ENCODE measurements at regions of chr1 and their contacts with region 1.

Region 1: DNA sequence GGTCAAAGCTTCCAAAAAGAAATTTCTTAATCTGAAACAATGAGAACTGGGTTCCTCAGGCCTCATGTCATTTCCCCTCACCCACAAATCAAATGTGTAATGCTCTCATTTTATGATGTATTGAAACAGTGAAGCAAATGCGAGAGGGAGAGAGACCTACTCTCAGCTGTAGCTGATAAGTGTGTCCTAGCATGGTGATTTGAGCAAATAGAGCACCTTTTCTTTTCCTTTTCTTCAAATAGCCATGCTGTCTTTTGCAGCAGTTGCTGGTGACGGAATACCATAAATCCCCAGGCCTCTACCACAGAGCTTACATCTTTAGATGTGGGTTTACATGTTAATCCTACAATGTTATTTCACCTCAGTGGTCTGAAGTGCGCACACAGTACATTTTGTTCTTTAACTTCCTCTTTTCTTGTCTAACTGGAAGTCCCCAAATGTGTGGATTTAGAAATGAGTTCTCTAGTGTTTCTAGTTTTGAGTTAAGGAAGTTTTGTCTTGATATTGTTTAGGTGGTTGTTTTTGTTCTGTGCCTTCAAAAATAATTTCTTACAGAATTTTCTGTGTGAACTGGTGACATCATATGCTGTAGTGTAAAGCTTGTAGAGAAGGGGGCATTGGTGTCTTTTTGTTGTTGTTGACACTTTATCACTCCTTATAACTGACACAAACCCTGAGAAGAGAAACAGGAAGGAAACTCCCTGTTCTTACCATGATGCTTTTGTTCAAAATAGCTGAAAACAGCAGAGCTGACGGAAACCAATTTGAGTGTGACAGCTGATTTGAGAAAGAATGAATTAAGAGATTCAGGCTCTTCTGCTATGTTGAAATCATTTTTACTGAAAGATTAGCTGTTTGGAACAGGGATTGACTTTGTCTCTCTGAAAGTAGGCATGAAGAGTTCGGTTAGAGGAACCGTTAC is 12.2 kb downstream of the SMAP2 start:
- DNase-seq: no peak
- ATAC-seq: no peak
- H3K4me3 Mint-ChIP-seq: no peak overlapping the region
- H3K27ac Mint-ChIP-seq: 0 out of 2 replicates have a peak overlapping the region, but pooled peaks have one; percentile 29
- H3K4me1 Mint-ChIP-seq: peaks cover 8% of the 10 kb centered on the region; the same call in 1 of the 2 replicates
- H3K27me3 Mint-ChIP-seq: no peaks in the 10 kb centered on the region
- CTCF ChIP-seq: no peak

Region 2: DNA sequence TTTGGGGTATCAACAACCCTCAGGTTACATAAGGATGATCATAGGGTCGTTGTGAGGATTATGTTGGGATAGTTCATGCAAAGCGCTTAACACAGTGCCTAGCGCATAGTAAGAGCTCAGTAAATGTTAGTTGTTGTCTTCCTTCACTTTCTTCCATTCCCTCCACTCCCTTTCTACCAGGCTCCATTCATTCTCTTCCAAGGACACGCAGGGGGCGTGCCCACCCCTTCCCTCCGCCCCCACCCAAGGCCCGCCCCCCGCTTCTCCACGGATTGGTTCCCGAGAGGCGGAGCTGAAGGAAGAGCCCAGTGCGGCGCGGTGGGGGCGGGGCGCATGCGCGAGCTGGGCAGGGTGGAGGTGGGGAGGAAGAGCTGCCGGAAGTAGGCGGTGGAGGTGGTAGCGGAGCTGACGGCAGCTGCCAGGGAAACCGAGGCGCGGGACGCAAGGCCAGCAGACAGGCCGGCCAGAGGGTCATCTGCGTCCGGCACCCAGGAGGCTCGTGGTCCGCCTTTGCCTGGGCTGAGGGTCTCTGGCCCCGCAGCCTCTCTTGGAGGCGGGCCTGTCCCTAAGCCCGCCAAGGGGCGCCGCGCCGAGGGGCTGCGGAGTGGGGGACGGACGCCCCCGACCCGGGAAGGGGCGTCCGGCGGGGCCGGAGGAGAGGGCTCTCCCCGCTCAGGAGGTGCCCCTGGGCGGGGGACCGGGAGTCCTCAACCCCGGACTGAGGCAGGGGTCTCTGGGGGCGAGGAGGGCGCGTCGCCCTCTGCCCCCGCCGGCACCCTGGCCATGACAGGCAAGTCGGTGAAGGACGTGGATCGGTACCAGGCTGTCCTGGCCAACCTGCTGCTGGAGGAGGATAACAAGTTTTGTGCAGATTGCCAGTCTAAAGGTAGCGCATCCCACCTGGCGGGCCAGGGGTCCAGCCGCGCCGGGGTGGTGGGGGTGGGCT is 12.1 kb before region 1 on chr1 and contains the start of gene SMAP2:
- CTCF ChIA-PET with region 1: interaction called, 13 read pairs
- POLR2A ChIA-PET with region 1: no interaction called
- DNase-seq: peak; percentile 97
- ATAC-seq: peak; percentile 98
- H3K4me3 Mint-ChIP-seq: peak within 1 kb of the TSS; percentile 89
- H3K27ac Mint-ChIP-seq: peak within 1 kb of the TSS; percentile 23; the same call in 1 of the 2 replicates
- H3K4me1 Mint-ChIP-seq: peaks cover 15% of the 10 kb centered on the region
- H3K27me3 Mint-ChIP-seq: peaks cover 13% of the 10 kb centered on the region
- CTCF ChIP-seq: no peak
- total RNA-seq, gene SMAP2: 4.9 to 5.7 TPM (median 5.7 TPM) in 3 replicates

Measured in WTC11 (cell line).